ENCODE measurements at regions of chr15 and their contacts with region 1.

Region 1: GRCh38 chr15:85667491-85668424 is 127.0 kb downstream of the KLHL25 start:
- DNase-seq: no peak

Region 2: DNA sequence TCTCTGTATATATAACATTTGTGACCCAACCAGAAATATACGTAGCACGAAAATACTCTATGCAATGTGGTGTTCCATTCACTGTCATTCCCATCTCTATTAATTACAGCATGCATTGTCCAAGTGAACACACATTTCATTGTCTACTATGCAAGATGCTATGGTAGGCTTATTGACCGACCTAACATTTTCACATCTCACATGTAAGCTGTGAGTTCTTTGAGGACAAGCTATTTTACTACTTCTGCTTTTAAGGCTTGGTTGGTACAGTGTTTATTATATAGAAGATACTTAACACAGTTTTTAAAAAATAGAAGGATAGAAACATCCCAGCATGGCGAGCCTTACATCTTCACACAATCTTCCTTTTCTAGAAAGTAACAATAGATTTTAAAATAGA is 37.4 kb before region 1 on chr15:
- intact Hi-C with region 1: loop called (anchors 5 kb)
- DNase-seq: no peak

Region 3: GRCh38 chr15:85649372-85649771 is 18.4 kb before region 1 on chr15:
- intact Hi-C with region 1: loop called (anchors 2 kb)
- DNase-seq: no peak